ENCODE measurements at regions of chr19 and their contacts with region 1.

Region 1: DNA sequence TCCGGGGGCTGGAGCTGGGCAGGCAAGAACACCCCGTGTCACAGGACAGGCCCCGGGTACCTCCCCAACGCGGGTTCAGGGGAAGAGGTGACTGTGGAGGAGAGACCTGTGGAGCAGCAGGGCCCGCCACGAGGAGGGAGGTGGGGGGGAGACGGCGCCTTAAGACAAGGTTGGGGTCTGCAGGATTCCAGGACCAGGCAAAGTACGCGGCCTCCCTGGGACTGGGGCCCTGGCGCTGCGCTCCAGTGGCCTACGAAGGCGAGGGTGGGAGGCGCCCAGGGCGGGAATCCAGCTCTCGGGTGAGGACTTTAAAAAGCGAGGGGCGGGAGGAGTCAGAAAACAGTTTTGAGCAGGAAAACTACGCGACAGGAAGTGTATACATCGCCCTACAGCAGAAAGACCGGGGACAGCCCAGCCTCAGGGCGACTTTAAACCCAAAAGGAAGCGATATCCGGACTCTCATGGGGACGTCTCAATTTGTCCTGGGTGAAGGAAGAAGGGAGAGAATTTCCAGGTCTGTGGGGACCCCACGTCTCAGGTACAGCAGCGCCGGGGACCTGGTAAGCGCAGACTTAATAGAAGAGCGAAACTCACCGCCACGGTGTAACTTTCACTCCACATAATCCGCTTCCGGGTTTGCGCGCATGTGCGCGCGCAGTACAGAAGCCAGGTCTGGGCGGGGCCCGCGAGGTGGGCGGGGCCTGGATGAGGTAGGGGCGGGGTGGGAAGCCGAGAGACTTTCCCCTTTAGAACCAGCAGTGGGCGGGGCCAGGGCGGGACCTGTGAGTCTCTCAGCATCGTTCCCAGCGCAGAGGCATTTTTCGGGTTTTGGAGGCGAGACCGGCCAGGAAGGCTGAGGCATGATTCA is at the start of gene ZNF83:
- DNase-seq: peak; percentile 92 to 99
- H3K4me3 ChIP-seq: peak within 1 kb of the TSS; percentile 62 to 77
- H3K27ac ChIP-seq: peak within 1 kb of the TSS; percentile 87 to 92
- H3K4me1 ChIP-seq: peaks cover 0 to 14% of the 10 kb centered on the region in 2 donors
- H3K27me3 ChIP-seq: no peaks in the 10 kb centered on the region
- CTCF ChIP-seq: no peak
- total RNA-seq, gene ZNF83: 29.1 TPM

Region 2: DNA sequence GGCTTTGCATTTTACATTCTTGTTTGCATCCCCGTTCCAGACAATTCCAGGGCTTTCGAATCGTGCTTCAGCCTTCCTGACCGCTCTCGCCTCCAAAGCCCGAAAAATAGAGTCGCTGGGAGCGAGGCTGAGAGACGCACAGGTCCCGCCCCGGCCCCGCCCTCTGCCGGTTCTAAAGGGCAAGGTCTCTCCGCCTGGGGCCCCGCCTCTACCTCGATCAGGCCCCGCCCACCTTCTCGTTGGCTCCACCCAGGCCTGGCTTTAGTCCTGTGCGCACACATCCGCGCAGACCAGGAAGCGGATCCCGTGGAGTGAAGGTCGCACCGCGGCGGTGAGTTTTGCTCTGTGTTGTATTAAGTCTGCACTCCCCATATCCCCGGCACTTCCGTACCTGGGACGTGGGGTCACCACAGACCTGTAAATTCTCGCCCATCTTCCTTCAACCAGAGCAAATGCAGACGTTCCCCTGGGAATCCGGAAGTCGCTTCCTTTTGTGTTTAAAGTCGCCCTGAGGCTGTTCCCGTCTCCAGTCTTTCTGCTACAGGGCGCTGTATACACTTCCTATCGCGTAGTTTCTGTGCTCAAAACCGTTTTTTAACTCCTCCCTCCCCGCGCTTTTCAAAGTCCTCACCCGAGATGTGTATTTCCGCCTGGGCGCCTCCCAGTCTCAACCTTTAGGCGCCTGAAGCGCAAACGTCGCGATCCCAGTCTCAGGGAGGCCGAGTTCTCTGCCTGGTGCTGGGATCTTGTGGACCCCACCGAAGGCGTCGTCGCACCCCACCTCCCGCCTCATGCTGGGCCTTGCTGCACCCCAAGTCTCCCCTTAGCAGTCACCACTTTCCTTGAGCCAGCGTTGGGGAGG is 67.7 kb before region 1 on chr19 and contains the start of gene ZNF701:
- intact Hi-C with region 1: loop called (anchors 1 kb)
- DNase-seq: peak; percentile 81 to 98
- H3K4me3 ChIP-seq: peak within 1 kb of the TSS; percentile 80 to 82
- H3K27ac ChIP-seq: peak within 1 kb of the TSS; percentile 75 to 86
- H3K4me1 ChIP-seq: peaks cover 0 to 5% of the 10 kb centered on the region in 2 donors
- H3K27me3 ChIP-seq: no peaks in the 10 kb centered on the region
- CTCF ChIP-seq: peak in 2 of 3 experiments; percentile 26 to 48
- total RNA-seq, gene ZNF701: 13.2 TPM

Region 3: GRCh38 chr19:52660981-52661380 is 23.0 kb after region 1 on chr19:
- intact Hi-C with region 1: no loop called
- DNase-seq: no peak
- H3K4me3 ChIP-seq: no peak overlapping the region
- H3K27ac ChIP-seq: no peak overlapping the region
- H3K4me1 ChIP-seq: no peaks in the 10 kb centered on the region
- H3K27me3 ChIP-seq: no peaks in the 10 kb centered on the region
- CTCF ChIP-seq: no peak

Region 4: DNA sequence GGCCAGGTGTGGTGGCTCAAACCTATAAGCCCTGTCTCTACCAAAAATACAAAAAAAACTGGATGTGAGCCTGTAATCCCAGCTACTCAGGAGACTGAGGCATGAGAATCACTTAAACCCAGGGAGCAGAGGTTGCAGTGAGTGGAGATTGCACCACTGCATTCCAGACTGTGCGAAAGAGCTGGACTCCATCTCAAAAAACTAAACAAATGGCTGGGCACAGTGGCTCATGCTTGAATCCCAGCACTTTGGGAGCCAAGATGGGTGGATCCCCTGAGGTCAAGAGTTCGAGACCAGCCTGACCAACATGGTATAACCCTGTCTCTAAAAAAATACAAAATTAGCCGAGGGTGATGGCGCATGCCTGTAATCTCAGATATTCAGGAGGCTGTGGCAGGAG is 35.1 kb after region 1 on chr19:
- intact Hi-C with region 1: no loop called
- DNase-seq: no peak
- H3K4me3 ChIP-seq: no peak overlapping the region
- H3K27ac ChIP-seq: no peak overlapping the region
- H3K4me1 ChIP-seq: no peaks in the 10 kb centered on the region
- H3K27me3 ChIP-seq: no peaks in the 10 kb centered on the region
- CTCF ChIP-seq: no peak

Region 5: DNA sequence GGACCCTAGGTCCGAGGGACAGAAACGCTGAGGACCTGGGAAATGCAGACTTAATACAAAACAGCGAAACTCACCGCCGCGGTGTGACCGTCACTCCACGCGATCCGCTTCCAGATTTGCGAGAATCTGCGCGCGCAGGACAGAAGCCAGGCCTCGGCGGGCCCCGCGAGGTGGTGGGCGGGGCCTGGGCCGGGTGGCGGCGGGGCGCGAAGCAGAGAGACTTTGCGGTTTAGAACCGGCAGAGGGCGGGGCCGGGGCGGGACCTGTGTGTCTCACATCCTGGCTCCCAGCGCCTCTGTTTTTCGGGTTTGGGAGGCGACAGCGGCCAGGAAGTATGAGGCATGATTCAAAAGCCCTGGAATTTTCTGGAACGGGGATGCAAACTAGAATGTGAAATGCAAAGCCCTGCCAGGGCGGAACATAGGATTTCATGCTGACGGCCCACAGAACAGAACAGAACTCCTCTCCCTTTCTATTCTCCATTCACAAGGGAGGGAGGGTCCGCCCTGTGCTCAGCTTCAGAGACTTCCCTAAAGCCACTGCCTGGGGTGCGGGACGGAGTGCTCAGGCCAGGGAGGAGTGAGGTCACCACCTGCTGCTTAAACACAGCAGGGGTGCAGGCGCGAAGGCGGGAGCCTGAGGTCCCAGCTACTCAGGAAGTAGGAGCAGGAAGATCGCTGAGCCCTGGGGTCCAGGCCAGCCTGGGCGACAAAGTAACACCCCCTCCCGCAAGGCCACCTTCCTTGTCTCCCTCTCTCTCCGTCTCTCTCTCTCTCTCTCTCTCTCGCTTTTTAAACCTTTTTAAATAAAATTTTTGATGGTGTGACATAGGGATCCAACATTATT is 52.6 kb after region 1 on chr19:
- intact Hi-C with region 1: loop called (anchors 1 kb)
- DNase-seq: peak; percentile 89 to 98
- H3K4me3 ChIP-seq: peak overlapping the region; percentile 56 to 89
- H3K27ac ChIP-seq: peak overlapping the region; percentile 95 to 98
- H3K4me1 ChIP-seq: peaks cover 3 to 28% of the 10 kb centered on the region in 2 donors
- H3K27me3 ChIP-seq: no peaks in the 10 kb centered on the region
- CTCF ChIP-seq: peak in 2 of 3 experiments; percentile 16 to 19